ENCODE measurements at regions of chr20 and their contacts with region 1.

Region 1: GRCh38 chr20:21235484-21236445 is 67.4 kb upstream of the XRN2 start:
- DNase-seq: peak; percentile 72 to 78
- H3K4me3 ChIP-seq: no peak overlapping the region
- H3K27ac ChIP-seq: no peak overlapping the region
- H3K4me1 ChIP-seq: peaks cover 10% of the 10 kb centered on the region
- H3K27me3 ChIP-seq: no peaks in the 10 kb centered on the region
- CTCF ChIP-seq: peak; percentile 93

Region 2: DNA sequence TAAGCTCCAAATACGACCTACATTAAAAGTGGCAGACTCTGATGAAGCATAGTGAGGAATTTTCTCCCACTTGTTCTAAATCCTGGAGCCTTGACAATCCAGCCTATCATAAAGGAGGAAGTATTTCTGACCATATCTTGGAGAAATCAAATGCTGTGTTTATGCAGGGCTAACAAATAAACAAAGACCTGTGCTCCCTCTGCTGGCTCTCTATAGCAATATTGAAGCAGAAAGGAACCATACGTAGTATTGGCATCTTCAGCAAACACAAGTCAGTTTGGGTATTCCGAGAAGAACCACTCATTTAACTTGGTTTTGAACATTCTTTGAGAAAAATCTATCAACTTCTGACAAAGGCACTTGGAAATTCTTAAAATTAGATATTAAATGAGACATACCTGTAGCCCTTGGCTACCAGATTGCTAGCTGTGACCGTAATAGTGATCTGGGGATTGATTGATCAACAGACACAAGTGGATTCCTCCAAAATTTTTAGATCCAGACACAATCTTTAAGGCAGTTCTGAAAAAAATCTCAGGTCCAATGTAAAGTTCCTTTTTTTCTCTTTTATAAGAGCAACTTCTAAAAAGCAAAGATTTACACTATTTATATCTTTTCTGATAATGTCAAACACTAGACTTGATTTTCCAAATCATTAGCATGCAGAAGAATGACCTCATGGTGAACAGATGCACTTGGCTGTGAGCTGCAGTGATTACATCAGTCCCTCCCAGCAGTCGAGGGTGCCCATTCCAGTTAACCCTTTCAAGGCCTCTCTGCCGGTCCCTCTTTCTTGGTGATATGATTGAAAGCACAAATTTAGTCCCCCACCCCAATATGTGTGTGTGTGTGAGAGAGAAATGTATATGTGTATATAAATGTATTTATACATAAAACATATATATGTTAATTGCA is 827.6 kb before region 1 on chr20:
- CTCF ChIA-PET with region 1: no interaction called
- POLR2A ChIA-PET with region 1: no interaction called
- intact Hi-C with region 1: no loop called
- DNase-seq: no peak
- H3K4me3 ChIP-seq: no peak overlapping the region
- H3K27ac ChIP-seq: no peak overlapping the region
- H3K4me1 ChIP-seq: no peaks in the 10 kb centered on the region
- H3K27me3 ChIP-seq: no peaks in the 10 kb centered on the region
- CTCF ChIP-seq: peak; percentile 55

Region 3: DNA sequence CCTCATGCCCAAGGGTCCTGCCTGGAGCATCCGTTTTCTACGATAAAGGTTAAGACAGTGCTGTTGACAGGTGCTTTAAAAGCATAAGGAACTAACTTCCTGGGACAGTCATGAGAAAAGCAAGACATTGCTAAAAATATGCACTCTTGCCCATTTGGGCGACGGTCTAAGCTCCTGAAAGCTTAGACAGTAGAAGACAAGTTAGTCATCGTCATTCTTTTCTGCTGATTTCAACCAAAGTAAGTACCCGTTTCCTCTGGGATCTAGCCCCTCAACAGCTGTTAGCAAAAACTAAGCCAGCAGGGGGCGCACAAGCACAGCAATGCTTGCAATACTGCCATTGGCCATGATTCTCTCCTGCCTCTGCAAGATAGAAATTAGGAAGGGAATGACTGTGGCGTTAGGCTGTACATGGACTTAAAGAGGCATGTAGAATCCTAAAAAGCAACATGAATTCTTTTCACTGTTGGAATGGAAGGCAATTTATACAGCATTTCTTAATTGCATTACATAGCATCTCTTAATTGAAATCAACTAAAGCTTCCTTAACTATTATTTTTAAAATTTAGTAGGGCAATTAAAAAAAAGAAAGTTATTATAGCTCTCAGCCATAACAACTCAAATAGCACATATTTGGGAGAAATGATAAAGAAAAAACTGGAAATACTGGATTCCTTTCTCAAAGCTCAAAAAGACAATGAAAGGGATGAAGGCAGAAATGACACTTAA is 375.5 kb before region 1 on chr20:
- CTCF ChIA-PET with region 1: no interaction called
- POLR2A ChIA-PET with region 1: no interaction called
- intact Hi-C with region 1: loop called (anchors 10 kb)
- DNase-seq: peak; percentile 62 to 71
- H3K4me3 ChIP-seq: no peak overlapping the region
- H3K27ac ChIP-seq: no peak overlapping the region
- H3K4me1 ChIP-seq: no peaks in the 10 kb centered on the region
- H3K27me3 ChIP-seq: peaks cover 9% of the 10 kb centered on the region
- CTCF ChIP-seq: peak; percentile 89

Region 4: GRCh38 chr20:21352703-21353102 is 116.9 kb after region 1 on chr20:
- CTCF ChIA-PET with region 1: no interaction called
- POLR2A ChIA-PET with region 1: no interaction called
- intact Hi-C with region 1: no loop called
- DNase-seq: no peak
- H3K4me3 ChIP-seq: no peak overlapping the region
- H3K27ac ChIP-seq: no peak overlapping the region
- H3K4me1 ChIP-seq: no peaks in the 10 kb centered on the region
- H3K27me3 ChIP-seq: no peaks in the 10 kb centered on the region
- CTCF ChIP-seq: no peak

Region 5: DNA sequence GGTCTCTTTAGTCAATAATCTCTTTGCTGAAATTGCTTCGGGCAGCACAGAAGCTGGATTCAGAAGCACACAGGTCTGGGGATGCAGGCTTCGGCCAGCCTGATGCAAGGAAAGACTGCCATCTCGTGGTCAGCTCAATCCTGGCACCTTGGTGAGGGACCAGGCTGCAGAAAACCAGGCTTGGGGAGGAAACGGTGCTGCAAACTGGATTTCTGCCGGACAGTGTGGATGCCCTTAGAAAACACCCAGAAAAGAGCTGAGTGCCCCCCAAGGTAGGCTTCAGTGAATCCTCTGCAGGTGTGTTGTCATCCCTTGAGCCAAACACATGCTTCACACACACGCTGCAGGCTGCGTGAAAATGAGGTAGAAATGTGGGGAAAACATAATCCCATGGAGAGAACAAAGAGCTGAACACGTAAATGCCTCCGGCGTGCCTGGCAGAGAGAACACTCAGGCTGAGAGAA is 379.9 kb after region 1 on chr20:
- CTCF ChIA-PET with region 1: no interaction called
- POLR2A ChIA-PET with region 1: no interaction called
- intact Hi-C with region 1: loop called (anchors 5 kb)
- DNase-seq: peak in 1 of 2 experiments; percentile 41
- H3K4me3 ChIP-seq: no peak overlapping the region
- H3K27ac ChIP-seq: no peak overlapping the region
- H3K4me1 ChIP-seq: no peaks in the 10 kb centered on the region
- H3K27me3 ChIP-seq: peaks cover 31% of the 10 kb centered on the region; the same call in 1 of the 2 replicates
- CTCF ChIP-seq: peak; percentile 80

Measured in PC-9 (cell line).